H1 (cell line): ENCODE measurements at regions of chr7 and their contacts with region 1.

Region 1: GRCh38 chr7:2451171-2452073 is 24.8 kb downstream of the GRIFIN start:
- DNase-seq: peak; percentile 59 to 96
- H3K4me3 ChIP-seq: no peak overlapping the region
- H3K27ac ChIP-seq: no peak overlapping the region
- H3K4me1 ChIP-seq: peaks cover 0 to 8% (median 6%) of the 10 kb centered on the region in 4 experiments; a peak in 5 of 7 replicates
- H3K27me3 ChIP-seq: no peaks in the 10 kb centered on the region
- CTCF ChIP-seq: peak; percentile 93 to 96 (median 96)
- EP300 ChIP-seq: no peak
- POLR2A ChIP-seq: no peak; a peak in 1 of 3 replicates
- RAD21 ChIP-seq: peak; percentile 93 to 97

Region 2: DNA sequence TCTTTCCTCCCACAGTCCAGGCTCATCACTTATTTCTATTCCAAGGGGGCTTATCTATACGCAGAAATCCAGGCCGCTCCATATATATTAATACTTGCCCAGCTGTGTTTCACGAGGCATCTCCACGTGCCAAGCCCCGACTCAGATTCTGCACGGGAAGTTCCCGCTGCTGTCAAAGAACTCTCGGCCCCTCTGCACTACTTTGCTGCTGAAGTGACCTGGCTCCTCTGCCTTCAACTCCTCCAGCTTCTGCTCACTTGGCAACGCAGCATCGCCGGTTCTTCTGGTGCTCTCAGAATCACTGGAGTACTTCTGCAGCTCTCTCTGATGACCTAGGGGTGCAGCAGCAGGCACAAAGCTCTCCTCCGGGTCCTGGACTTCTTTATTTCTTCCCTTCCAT is 57.7 kb before region 1 on chr7:
- CTCF ChIA-PET with region 1: interaction called, 13 read pairs
- POLR2A ChIA-PET with region 1: no interaction called
- DNase-seq: no peak
- H3K4me3 ChIP-seq: no peak overlapping the region
- H3K27ac ChIP-seq: no peak overlapping the region
- H3K4me1 ChIP-seq: no peaks in the 10 kb centered on the region; a peak in 1 of 7 replicates
- H3K27me3 ChIP-seq: no peaks in the 10 kb centered on the region; a peak in 1 of 7 replicates
- CTCF ChIP-seq: no peak
- EP300 ChIP-seq: no peak
- POLR2A ChIP-seq: no peak
- RAD21 ChIP-seq: no peak

Region 3: DNA sequence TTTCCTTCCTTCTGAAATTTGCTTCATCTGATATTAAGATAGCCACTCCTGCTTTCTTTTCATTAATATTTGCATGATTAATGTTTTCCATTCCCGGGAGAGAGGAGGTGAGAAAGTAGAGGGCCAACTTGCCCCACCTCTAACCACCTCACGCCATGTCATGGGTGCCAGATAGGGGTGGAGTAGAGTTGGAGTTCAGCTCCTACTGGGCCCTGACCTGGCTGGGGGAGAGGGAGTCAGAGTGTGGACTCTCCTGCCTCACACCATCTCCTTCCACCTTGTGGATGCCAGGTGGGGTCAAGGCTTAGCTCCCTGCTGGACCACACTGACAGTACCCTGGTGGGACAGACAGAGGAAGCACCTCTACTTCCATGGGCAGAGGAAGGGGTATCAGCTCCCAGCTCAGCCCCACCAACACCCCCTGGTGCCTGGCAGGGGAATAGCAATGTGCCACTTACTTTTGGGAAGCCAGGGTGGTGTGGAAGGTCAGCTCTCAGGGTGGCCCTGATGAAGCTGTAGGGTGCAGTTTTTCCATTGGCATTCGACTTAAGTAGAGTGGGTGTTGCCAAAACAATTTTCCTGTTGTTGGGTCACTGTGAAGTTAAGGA is 20.1 kb before region 1 on chr7:
- CTCF ChIA-PET with region 1: interaction called, 119 read pairs
- POLR2A ChIA-PET with region 1: interaction called, 3 read pairs
- DNase-seq: peak; percentile 51 to 85
- H3K4me3 ChIP-seq: no peak overlapping the region
- H3K27ac ChIP-seq: no peak overlapping the region
- H3K4me1 ChIP-seq: no peaks in the 10 kb centered on the region; a peak in 1 of 7 replicates
- H3K27me3 ChIP-seq: no peaks in the 10 kb centered on the region
- CTCF ChIP-seq: peak; percentile 77 to 95 (median 93)
- EP300 ChIP-seq: no peak
- POLR2A ChIP-seq: no peak
- RAD21 ChIP-seq: peak; percentile 77 to 81

Region 4: DNA sequence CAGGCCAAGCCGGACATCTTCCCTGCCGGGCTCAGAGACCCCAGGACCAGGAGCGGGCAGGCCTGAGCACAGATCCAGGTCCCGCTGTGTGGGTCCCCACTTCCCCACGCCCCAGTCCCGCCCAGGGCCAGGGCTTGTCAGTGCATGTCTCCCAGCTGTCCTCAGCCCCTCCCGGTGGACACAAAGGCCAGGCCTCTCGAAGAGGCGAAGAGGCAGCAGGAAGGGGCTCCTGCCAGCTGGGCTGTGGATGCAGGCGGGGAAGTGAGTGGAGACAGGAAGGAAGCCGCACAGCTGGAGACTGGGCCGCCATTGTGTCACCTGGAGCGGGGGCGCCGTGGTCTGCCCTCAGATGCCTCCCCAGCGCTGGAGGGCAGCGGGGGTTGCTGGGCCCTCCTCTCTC is 20.0 kb after region 1 on chr7:
- CTCF ChIA-PET with region 1: interaction called, 266 read pairs
- POLR2A ChIA-PET with region 1: interaction called, 15 read pairs
- DNase-seq: no peak
- H3K4me3 ChIP-seq: no peak overlapping the region
- H3K27ac ChIP-seq: no peak overlapping the region
- H3K4me1 ChIP-seq: peaks cover 0 to 21% (median 17%) of the 10 kb centered on the region in 4 experiments; a peak in 6 of 7 replicates
- H3K27me3 ChIP-seq: no peaks in the 10 kb centered on the region; a peak in 2 of 7 replicates
- CTCF ChIP-seq: no peak
- EP300 ChIP-seq: no peak
- POLR2A ChIP-seq: no peak
- RAD21 ChIP-seq: no peak

Region 5: DNA sequence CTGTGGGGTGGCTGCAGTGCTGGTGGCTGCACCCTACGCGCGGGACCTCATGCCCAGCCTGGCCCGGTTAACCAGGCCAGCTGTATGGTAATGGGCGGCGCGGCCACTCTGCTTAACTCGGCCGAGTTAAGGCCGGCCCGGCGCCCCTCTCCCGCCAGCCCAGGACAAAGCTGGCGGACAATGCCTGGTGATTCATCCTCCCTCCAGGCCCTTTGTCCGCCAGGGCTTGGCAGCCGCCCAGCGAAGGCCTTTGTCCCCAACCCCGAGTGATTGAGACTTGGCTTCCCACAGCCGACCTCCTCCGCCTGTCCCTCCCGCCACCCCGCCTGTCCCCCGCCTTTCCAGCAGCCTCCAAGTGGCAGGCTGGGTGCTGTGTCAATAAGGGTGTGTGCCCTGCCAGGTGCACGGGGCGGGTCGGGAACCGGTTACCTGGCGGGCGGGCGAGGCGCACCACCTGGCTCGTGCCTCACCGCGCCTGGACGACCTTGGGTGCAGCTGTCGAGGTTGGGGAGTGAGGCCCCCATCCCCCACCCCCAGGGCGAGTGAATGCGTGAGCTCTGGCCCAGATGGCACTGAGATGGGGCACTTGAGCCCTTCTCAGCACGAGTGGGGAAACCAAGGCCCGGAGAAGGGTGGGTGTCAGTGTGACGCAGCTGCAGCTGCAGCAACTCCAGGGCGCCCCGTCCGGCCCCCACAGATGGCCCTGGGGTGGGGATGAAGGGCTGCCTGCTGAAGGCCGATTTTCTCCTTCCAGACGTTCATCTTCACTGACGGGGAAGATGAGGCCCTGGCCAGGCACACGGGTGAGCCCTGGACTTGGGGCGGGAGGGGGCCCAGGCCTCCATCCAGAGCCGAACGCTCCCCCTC is 72.8 kb after region 1 on chr7:
- CTCF ChIA-PET with region 1: interaction called, 42 read pairs
- POLR2A ChIA-PET with region 1: interaction called, 4 read pairs
- DNase-seq: peak in 1 of 2 experiments; percentile 78
- H3K4me3 ChIP-seq: peak overlapping the region in 3 of 4 experiments; percentile 23 to 73 (median 38); a peak in 5 of 8 replicates
- H3K27ac ChIP-seq: peak overlapping the region; percentile 78
- H3K4me1 ChIP-seq: peaks cover 0 to 61% (median 44%) of the 10 kb centered on the region in 4 experiments; a peak in 6 of 7 replicates
- H3K27me3 ChIP-seq: peaks cover 0 to 12% (median 3%) of the 10 kb centered on the region in 4 experiments; a peak in 5 of 7 replicates
- CTCF ChIP-seq: no peak
- EP300 ChIP-seq: no peak
- POLR2A ChIP-seq: peak in 1 of 2 experiments; percentile 32; a peak in 1 of 3 replicates
- RAD21 ChIP-seq: no peak

Region 6: GRCh38 chr7:2558629-2559282 is 107.3 kb after region 1 on chr7 and contains the start of gene IQCE:
- CTCF ChIA-PET with region 1: interaction called, 16 read pairs
- POLR2A ChIA-PET with region 1: no interaction called
- DNase-seq: peak; percentile 64 to 98
- H3K4me3 ChIP-seq: peak within 1 kb of the TSS; percentile 46 to 86 (median 78)
- H3K27ac ChIP-seq: no peak within 1 kb of the TSS
- H3K4me1 ChIP-seq: peaks cover 3 to 14% (median 6%) of the 10 kb centered on the region in 4 experiments
- H3K27me3 ChIP-seq: no peaks in the 10 kb centered on the region
- CTCF ChIP-seq: no peak
- EP300 ChIP-seq: 0 out of 3 replicates have a peak, but pooled peaks of 1 of the 2 experiments have one; percentile 5
- POLR2A ChIP-seq: no peak
- RAD21 ChIP-seq: no peak
- total RNA-seq, gene IQCE: 4.9 and 5.7 TPM in 2 replicates

Region 7: DNA sequence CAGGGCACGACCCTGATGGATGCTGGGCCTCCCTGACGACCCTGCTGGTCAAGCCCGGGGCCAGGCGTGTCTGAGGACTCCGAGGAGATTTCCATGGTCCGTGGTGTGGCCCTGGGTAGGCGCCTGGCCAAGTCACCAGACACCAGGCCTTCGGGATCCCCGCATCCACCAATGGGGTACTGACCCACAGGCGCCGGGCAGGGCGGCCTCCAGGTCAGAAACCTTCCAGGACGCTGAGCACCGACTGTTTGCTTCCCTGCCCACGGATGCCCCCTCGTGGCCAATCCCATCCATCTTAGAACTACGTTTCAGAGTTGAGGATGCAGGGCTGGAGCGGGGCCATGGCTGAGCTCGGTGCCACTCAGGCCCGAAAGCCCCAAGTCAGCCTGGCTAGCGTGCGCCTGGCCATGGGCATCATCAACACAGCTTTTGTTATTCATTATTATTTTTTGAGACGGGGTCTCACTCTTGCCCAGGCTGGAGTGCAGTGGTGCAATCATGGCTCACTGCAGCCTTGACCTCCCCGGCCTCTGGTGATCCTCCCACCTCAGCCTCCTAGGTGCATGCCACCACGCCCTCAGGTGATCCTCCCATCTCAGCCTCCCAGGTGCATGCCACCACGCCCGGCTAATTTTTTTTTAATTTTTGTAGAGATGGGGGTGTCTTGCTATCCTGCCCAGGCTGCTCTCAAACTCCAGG is 229.5 kb after region 1 on chr7:
- CTCF ChIA-PET with region 1: interaction called, 17 read pairs
- POLR2A ChIA-PET with region 1: no interaction called
- DNase-seq: peak; percentile 46 to 95
- H3K4me3 ChIP-seq: no peak overlapping the region
- H3K27ac ChIP-seq: no peak overlapping the region
- H3K4me1 ChIP-seq: no peaks in the 10 kb centered on the region
- H3K27me3 ChIP-seq: no peaks in the 10 kb centered on the region; a peak in 1 of 7 replicates
- CTCF ChIP-seq: peak; percentile 85 to 89 (median 86)
- EP300 ChIP-seq: no peak
- POLR2A ChIP-seq: no peak
- RAD21 ChIP-seq: peak; percentile 84 to 88